ENCODE measurements at regions of chr3 and their contacts with region 1.

Region 1: DNA sequence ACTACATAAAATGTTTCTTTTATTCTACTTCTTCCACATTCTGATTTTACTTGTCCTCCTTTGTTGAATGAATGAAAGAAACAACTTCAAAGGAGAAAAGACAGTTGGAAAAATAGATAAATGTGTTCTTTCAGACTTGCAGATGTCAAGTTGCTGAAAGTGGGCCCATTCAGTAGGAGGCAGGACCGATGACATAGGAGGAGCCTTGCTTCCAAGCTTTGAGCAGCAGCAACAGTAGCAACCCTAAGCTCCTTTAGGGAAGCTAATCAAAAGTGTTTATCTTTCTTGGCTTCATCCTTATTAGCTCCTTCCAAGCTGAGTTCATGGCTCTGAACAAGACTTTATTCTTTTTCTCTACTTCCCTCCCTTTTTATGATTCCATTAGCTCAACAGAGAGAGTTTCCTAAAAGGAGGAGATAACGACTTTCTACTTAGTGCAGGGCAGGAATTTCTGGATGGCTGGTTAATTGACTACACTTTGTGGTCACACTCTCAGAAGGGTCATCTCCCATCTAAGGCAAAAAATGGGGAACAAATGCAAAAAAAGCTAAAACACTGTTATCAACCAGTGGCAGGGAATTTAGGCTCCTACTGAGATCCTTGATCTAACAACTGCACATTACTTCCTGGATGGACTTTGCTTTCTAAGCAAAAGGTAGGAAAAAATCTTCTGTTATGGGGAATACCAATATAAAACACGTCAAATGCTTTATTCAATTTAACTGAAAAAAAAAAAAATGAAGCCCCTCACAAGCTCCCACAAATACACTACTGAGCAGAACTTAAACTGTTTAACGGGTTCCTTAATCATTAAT is 4.8 kb downstream of the MORC1 start:
- DNase-seq: no peak
- ATAC-seq: no peak
- H3K4me3 ChIP-seq: no peak overlapping the region
- H3K4me3 Mint-ChIP-seq: no peak overlapping the region
- H3K27ac ChIP-seq: no peak overlapping the region
- H3K27ac Mint-ChIP-seq: no peak overlapping the region
- H3K4me1 ChIP-seq: no peaks in the 10 kb centered on the region
- H3K4me1 Mint-ChIP-seq: no peaks in the 10 kb centered on the region
- H3K27me3 ChIP-seq: no peaks in the 10 kb centered on the region
- H3K27me3 Mint-ChIP-seq: peaks cover 3 to 23% (median 8%) of the 10 kb centered on the region in 5 donors

Region 2: GRCh38 chr3:109234300-109234699 is 121.1 kb after region 1 on chr3:
- CTCF ChIA-PET with region 1: no interaction called
- POLR2A ChIA-PET with region 1: no interaction called
- intact Hi-C with region 1: loop called in 1 of 2 experiments (anchors 5 kb)
- DNase-seq: no peak
- ATAC-seq: no peak
- H3K4me3 ChIP-seq: no peak overlapping the region
- H3K4me3 Mint-ChIP-seq: no peak overlapping the region
- H3K27ac ChIP-seq: no peak overlapping the region
- H3K27ac Mint-ChIP-seq: no peak overlapping the region
- H3K4me1 ChIP-seq: no peaks in the 10 kb centered on the region
- H3K4me1 Mint-ChIP-seq: no peaks in the 10 kb centered on the region
- H3K27me3 ChIP-seq: no peaks in the 10 kb centered on the region
- H3K27me3 Mint-ChIP-seq: peaks cover 0 to 23% (median 12%) of the 10 kb centered on the region in 5 donors

Region 3: DNA sequence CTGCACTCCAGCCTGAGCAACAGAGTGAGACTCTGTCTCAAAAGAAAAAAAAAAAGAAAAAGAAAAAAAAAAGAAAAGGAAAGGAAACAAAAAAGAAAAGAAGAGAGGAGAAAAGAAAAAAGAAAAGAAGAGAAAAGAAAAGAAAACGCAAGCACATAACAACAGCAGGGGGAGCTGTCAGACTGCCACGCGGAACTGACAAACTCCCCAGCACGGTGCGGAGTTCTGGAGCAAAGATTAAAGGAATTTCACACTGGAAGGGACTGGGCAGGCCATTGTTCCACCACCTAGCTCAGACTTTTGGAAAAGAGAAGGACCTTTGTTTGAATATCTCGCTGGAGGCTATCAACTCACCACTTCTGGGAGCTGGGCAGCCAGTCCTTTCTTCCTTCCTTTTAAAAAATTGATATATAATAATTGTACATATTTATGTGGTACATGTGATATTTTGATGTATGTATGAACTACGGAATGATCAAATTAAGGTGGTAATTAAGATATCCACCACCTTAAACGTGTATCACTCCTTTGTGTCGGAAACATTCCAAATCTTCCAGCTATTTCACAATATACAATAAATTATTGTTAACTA is 162.6 kb after region 1 on chr3:
- CTCF ChIA-PET with region 1: no interaction called
- POLR2A ChIA-PET with region 1: no interaction called
- intact Hi-C with region 1: no loop called
- DNase-seq: no peak
- ATAC-seq: no peak
- H3K4me3 ChIP-seq: no peak overlapping the region
- H3K4me3 Mint-ChIP-seq: no peak overlapping the region
- H3K27ac ChIP-seq: no peak overlapping the region
- H3K27ac Mint-ChIP-seq: no peak overlapping the region
- H3K4me1 ChIP-seq: no peaks in the 10 kb centered on the region
- H3K4me1 Mint-ChIP-seq: peaks cover 0 to 3% (median 0%) of the 10 kb centered on the region in 7 donors
- H3K27me3 ChIP-seq: no peaks in the 10 kb centered on the region
- H3K27me3 Mint-ChIP-seq: peaks cover 0 to 15% (median 6%) of the 10 kb centered on the region in 5 donors